MCF 10A (cell line): ENCODE measurements at regions of chr6 and their contacts with region 1.

Region 1: GRCh38 chr6:89610149-89610642 is 28.4 kb downstream of the LYRM2 start:
- DNase-seq: peak; percentile 63
- H3K4me3 Mint-ChIP-seq: no peak overlapping the region
- H3K27ac Mint-ChIP-seq: no peak overlapping the region
- H3K4me1 Mint-ChIP-seq: no peaks in the 10 kb centered on the region
- H3K27me3 Mint-ChIP-seq: no peaks in the 10 kb centered on the region
- CTCF ChIP-seq: peak; percentile 68

Region 2: DNA sequence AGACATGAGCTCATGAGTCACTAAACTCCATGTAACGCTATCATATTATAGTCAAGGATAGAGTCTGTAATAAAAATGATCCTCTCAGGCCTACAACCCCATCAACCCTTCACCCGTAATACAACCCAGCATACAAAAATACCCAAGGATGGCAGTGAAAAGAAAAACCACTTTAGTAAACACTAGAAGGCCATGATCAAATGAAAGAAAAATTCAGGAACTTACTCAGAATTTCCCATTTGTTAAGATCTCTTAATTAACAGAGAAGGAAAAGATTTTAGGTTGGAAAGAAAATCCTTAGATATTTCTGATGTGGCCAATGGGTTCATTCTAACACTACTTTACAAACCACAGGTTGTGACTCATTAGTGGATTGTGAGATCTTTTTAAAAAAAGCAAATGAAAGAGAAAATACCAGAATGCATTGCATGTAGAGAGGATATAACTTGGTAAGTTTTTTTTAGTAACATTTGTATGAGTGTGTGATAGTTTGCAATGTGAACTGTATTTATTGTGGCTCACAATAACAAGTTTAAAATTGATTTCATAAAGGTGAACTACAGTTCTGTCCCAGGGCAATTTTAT is 249.7 kb before region 1 on chr6:
- CTCF ChIA-PET with region 1: interaction called, 11 read pairs
- POLR2A ChIA-PET with region 1: no interaction called
- intact Hi-C with region 1: no loop called
- DNase-seq: peak; percentile 35
- H3K4me3 Mint-ChIP-seq: no peak overlapping the region
- H3K27ac Mint-ChIP-seq: no peak overlapping the region
- H3K4me1 Mint-ChIP-seq: no peaks in the 10 kb centered on the region
- H3K27me3 Mint-ChIP-seq: no peaks in the 10 kb centered on the region
- CTCF ChIP-seq: no peak

Region 3: GRCh38 chr6:89432875-89433251 is 177.3 kb before region 1 on chr6 and contains the start of gene ANKRD6:
- CTCF ChIA-PET with region 1: interaction called, 93 read pairs
- POLR2A ChIA-PET with region 1: interaction called, 4 read pairs
- intact Hi-C with region 1: loop called (anchors 1 kb)
- DNase-seq: peak; percentile 65
- H3K4me3 Mint-ChIP-seq: peak within 1 kb of the TSS; percentile 68
- H3K27ac Mint-ChIP-seq: no peak within 1 kb of the TSS
- H3K4me1 Mint-ChIP-seq: no peaks in the 10 kb centered on the region
- H3K27me3 Mint-ChIP-seq: peaks cover 42% of the 10 kb centered on the region
- CTCF ChIP-seq: peak; percentile 94
- total RNA-seq, gene ANKRD6: 1.0 and 2.1 TPM in 2 replicates

Region 4: GRCh38 chr6:89440200-89440599 is 170.0 kb before region 1 on chr6:
- CTCF ChIA-PET with region 1: interaction called, 25 read pairs
- POLR2A ChIA-PET with region 1: no interaction called
- intact Hi-C with region 1: no loop called
- DNase-seq: no peak
- H3K4me3 Mint-ChIP-seq: no peak overlapping the region
- H3K27ac Mint-ChIP-seq: no peak overlapping the region
- H3K4me1 Mint-ChIP-seq: no peaks in the 10 kb centered on the region
- H3K27me3 Mint-ChIP-seq: peaks cover 12% of the 10 kb centered on the region
- CTCF ChIP-seq: no peak

Region 5: DNA sequence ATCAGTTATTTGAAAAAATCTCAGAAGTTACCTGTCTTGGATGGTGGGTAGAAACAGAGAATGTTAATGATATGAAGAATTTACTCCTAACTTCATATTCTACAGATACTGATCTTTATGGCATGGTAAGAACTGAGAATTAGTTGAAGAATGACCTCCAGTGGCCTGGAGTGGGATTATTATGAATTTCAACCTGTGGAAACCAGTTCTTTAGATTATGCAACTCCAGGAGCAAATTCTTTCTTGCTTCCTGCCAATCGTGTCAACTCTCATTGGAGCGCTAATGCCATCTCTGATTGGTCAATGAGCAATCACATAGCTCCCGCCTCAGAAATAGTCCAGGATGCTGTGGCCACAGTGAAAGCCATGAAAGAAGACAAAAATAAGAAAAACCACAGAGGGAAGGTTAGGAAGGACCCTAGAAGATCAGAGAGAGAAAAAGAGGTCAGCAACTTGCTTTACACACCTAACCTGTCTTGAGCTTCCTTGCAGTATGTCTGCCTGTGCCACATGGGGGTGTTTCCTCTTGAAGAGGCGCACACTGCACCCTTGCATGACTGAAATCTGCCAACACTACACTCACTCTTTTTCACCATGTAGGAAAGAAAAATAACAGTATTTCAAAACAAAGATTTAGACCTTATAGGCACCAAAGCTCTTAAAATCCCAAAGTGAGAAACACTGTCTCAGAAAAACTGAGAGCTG is 12.1 kb before region 1 on chr6:
- CTCF ChIA-PET with region 1: interaction called, 58 read pairs
- POLR2A ChIA-PET with region 1: no interaction called
- intact Hi-C with region 1: no loop called
- DNase-seq: peak; percentile 76
- H3K4me3 Mint-ChIP-seq: peak overlapping the region; percentile 58
- H3K27ac Mint-ChIP-seq: no peak overlapping the region
- H3K4me1 Mint-ChIP-seq: peaks cover 6% of the 10 kb centered on the region
- H3K27me3 Mint-ChIP-seq: peaks cover 23% of the 10 kb centered on the region
- CTCF ChIP-seq: no peak

Region 6: DNA sequence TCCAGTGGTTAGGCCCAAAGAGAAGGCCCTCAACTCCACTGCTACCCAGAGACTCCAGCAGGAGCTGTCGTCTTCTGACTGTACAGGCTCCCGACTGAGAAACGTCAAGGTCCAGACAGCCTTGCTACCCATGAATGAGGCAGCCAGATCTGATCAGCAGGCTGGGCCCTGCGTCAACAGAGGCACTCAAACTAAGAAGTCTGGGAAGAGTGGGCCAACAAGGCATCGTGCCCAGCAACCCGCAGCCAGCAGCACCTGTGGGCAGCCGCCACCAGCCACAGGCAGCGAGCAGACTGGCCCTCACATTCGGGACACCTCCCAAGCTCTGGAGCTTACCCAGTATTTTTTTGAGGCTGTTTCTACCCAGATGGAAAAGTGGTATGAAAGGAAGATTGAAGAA is 20.3 kb after region 1 on chr6:
- CTCF ChIA-PET with region 1: interaction called, 11 read pairs
- POLR2A ChIA-PET with region 1: no interaction called
- intact Hi-C with region 1: no loop called
- DNase-seq: no peak
- H3K4me3 Mint-ChIP-seq: no peak overlapping the region
- H3K27ac Mint-ChIP-seq: no peak overlapping the region
- H3K4me1 Mint-ChIP-seq: no peaks in the 10 kb centered on the region
- H3K27me3 Mint-ChIP-seq: no peaks in the 10 kb centered on the region
- CTCF ChIP-seq: no peak

Region 7: GRCh38 chr6:91328241-91328640 is 1718.0 kb after region 1 on chr6:
- CTCF ChIA-PET with region 1: interaction called, 10 read pairs
- POLR2A ChIA-PET with region 1: no interaction called
- intact Hi-C with region 1: no loop called
- DNase-seq: no peak
- H3K4me3 Mint-ChIP-seq: no peak overlapping the region
- H3K27ac Mint-ChIP-seq: no peak overlapping the region
- H3K4me1 Mint-ChIP-seq: no peaks in the 10 kb centered on the region
- H3K27me3 Mint-ChIP-seq: peaks cover 10% of the 10 kb centered on the region
- CTCF ChIP-seq: no peak